CD8-positive, alpha-beta T cell (primary cell): ENCODE measurements at regions of chr19 and their contacts with region 1.

Region 1: GRCh38 chr19:9847087-9847671 is 12.1 kb downstream of the PIN1 start:
- DNase-seq: peak in 7 of 9 experiments; percentile 31 to 61 (median 51)
- ATAC-seq: peak; percentile 85
- H3K4me3 ChIP-seq: no peak overlapping the region
- H3K4me3 Mint-ChIP-seq: no peak overlapping the region
- H3K27ac ChIP-seq: no peak overlapping the region
- H3K27ac Mint-ChIP-seq: peak overlapping the region; percentile 57
- H3K4me1 ChIP-seq: peaks cover 14% of the 10 kb centered on the region
- H3K4me1 Mint-ChIP-seq: peaks cover 28% of the 10 kb centered on the region
- H3K27me3 ChIP-seq: no peaks in the 10 kb centered on the region
- H3K27me3 Mint-ChIP-seq: no peaks in the 10 kb centered on the region
- CTCF ChIP-seq: peak; percentile 34

Region 2: GRCh38 chr19:9627856-9628255 is 219.3 kb before region 1 on chr19:
- CTCF ChIA-PET with region 1: no interaction called
- POLR2A ChIA-PET with region 1: no interaction called
- intact Hi-C with region 1: loop called in 1 of 2 experiments (anchors 2 kb)
- DNase-seq: no peak
- ATAC-seq: no peak
- H3K4me3 ChIP-seq: no peak overlapping the region
- H3K4me3 Mint-ChIP-seq: no peak overlapping the region
- H3K27ac ChIP-seq: no peak overlapping the region
- H3K27ac Mint-ChIP-seq: no peak overlapping the region
- H3K4me1 ChIP-seq: no peaks in the 10 kb centered on the region
- H3K4me1 Mint-ChIP-seq: peaks cover 5% of the 10 kb centered on the region
- H3K27me3 ChIP-seq: no peaks in the 10 kb centered on the region
- H3K27me3 Mint-ChIP-seq: no peaks in the 10 kb centered on the region
- CTCF ChIP-seq: no peak

Region 3: DNA sequence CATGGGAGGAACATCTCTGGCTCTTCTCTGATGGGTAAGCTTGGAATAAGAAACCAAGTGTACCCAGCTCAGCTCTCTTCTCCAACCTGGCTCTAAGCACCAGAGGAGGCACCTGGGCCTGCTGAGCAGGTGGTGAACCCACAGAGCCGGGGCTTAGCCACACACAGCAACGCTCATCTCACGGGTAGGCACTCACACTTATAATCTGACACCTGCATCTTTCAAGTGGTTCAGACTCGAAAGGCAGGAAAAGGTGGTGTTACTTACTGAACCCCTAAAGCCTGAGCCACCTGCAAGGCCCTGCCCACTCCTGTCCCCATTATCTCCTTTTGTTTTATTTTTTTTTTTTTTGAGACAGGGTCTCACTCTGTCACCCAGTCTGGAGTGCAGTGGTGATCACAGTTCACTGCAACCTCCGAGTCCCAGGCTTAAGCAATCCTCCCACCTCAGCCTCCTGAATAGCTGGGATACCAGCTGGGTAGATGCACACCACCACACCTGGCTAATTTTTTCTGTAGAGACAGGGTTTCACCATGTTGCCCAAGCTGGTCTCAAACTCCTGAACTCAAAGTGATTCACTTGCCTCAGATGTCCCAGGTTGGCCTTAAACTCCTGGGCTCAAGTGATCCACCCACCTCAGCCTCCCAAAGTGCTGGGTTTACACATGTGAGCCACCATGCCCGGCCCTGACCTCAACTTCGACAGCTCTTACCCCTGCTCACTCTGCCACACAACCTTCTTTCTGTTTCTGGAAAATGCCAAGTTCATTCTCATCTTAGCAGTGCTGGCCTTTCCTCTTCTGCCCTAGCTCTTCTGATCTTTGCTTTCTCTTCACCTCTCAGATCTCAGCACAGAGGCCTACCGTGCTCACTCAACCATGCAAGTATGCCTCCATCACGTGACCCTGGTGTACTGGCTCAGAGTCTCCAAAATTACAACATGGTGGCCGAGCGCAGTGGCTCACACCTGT is 38.0 kb before region 1 on chr19:
- CTCF ChIA-PET with region 1: no interaction called
- POLR2A ChIA-PET with region 1: no interaction called
- intact Hi-C with region 1: no loop called
- DNase-seq: peak in 6 of 9 experiments; percentile 34 to 77 (median 66)
- ATAC-seq: peak; percentile 86
- H3K4me3 ChIP-seq: no peak overlapping the region
- H3K4me3 Mint-ChIP-seq: peak overlapping the region; percentile 23
- H3K27ac ChIP-seq: peak overlapping the region; percentile 34 to 52
- H3K27ac Mint-ChIP-seq: peak overlapping the region; percentile 70
- H3K4me1 ChIP-seq: peaks cover 54% of the 10 kb centered on the region
- H3K4me1 Mint-ChIP-seq: peaks cover 47% of the 10 kb centered on the region
- H3K27me3 ChIP-seq: no peaks in the 10 kb centered on the region
- H3K27me3 Mint-ChIP-seq: no peaks in the 10 kb centered on the region
- CTCF ChIP-seq: no peak

Region 4: DNA sequence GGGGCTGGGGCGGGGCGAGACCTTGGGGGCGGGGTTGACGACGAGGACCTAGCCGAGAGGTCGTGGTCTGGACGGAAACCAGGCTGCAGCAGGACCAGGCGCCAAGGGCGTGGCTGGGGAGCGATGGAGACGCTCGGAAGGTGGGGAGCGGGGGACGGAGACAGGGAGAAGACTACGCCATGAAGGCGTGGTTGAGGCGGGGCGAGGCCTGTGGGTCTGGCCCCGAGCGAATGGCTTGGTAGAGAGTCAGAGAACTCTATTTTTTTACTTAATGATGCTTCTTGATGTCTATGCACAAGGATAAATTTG is 27.6 kb before region 1 on chr19:
- CTCF ChIA-PET with region 1: no interaction called
- POLR2A ChIA-PET with region 1: no interaction called
- intact Hi-C with region 1: no loop called
- DNase-seq: no peak
- ATAC-seq: no peak
- H3K4me3 ChIP-seq: peak overlapping the region; percentile 53 to 65
- H3K4me3 Mint-ChIP-seq: peak overlapping the region; percentile 88
- H3K27ac ChIP-seq: peak overlapping the region; percentile 51 to 74
- H3K27ac Mint-ChIP-seq: peak overlapping the region; percentile 93
- H3K4me1 ChIP-seq: peaks cover 18% of the 10 kb centered on the region
- H3K4me1 Mint-ChIP-seq: peaks cover 37% of the 10 kb centered on the region
- H3K27me3 ChIP-seq: no peaks in the 10 kb centered on the region
- H3K27me3 Mint-ChIP-seq: no peaks in the 10 kb centered on the region
- CTCF ChIP-seq: no peak

Region 5: GRCh38 chr19:9857920-9858746 is 11.0 kb after region 1 on chr19:
- CTCF ChIA-PET with region 1: interaction called, 16 read pairs
- POLR2A ChIA-PET with region 1: interaction called, 3 read pairs
- intact Hi-C with region 1: no loop called
- DNase-seq: peak in 6 of 9 experiments; percentile 17 to 78 (median 45)
- ATAC-seq: peak; percentile 80
- H3K4me3 ChIP-seq: peak overlapping the region; percentile 50 to 63
- H3K4me3 Mint-ChIP-seq: peak overlapping the region; percentile 90
- H3K27ac ChIP-seq: peak overlapping the region; percentile 48 to 84
- H3K27ac Mint-ChIP-seq: peak overlapping the region; percentile 96
- H3K4me1 ChIP-seq: peaks cover 77% of the 10 kb centered on the region
- H3K4me1 Mint-ChIP-seq: peaks cover 86% of the 10 kb centered on the region
- H3K27me3 ChIP-seq: no peaks in the 10 kb centered on the region
- H3K27me3 Mint-ChIP-seq: no peaks in the 10 kb centered on the region
- CTCF ChIP-seq: no peak

Region 6: DNA sequence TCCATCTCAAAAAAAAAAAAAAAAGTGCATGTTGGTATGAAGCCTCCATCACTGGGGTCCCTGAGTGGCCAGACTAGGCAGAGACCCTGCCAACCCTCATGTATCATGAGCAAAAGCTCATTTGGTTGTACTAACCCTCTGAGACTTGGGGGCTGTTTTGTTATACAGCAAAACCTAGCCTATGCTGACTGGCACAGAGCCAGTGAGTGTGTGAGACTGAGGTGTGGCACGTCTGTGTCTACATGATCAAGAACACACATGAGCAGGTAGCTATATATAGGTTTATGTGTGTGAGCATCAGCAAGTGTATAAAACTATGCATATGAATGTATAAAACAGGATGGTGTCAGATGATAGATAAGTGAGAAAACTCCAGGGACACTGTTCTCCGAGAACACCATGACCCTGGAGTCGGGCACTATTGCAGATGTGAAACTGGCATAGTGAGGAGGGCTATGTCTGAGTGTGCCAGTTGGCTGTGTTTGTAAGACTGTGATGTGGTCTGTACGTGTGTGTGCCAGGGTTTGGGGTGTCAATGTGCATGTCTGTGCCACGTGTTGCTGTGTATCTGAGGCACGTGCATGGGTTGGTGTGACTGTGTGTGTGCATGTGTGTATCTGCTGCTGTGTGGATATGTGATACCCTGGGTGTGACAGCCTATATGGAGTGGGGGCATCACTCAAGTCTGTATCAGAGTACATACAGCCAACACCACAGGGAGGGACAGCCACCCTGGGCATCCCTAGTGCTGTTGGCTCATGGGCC is 44.6 kb after region 1 on chr19:
- CTCF ChIA-PET with region 1: no interaction called
- POLR2A ChIA-PET with region 1: no interaction called
- intact Hi-C with region 1: no loop called
- DNase-seq: no peak
- ATAC-seq: no peak
- H3K4me3 ChIP-seq: no peak overlapping the region
- H3K4me3 Mint-ChIP-seq: no peak overlapping the region
- H3K27ac ChIP-seq: no peak overlapping the region
- H3K27ac Mint-ChIP-seq: no peak overlapping the region
- H3K4me1 ChIP-seq: no peaks in the 10 kb centered on the region
- H3K4me1 Mint-ChIP-seq: no peaks in the 10 kb centered on the region
- H3K27me3 ChIP-seq: no peaks in the 10 kb centered on the region
- H3K27me3 Mint-ChIP-seq: peaks cover 5% of the 10 kb centered on the region
- CTCF ChIP-seq: no peak

Region 7: GRCh38 chr19:9914315-9915207 is 67.4 kb after region 1 on chr19:
- CTCF ChIA-PET with region 1: interaction called, 8 read pairs
- POLR2A ChIA-PET with region 1: no interaction called
- intact Hi-C with region 1: loop called (anchors 1 kb)
- DNase-seq: peak; percentile 69 to 89 (median 81)
- ATAC-seq: peak; percentile 92
- H3K4me3 ChIP-seq: peak overlapping the region; percentile 49 to 66
- H3K4me3 Mint-ChIP-seq: peak overlapping the region; percentile 73
- H3K27ac ChIP-seq: no peak overlapping the region
- H3K27ac Mint-ChIP-seq: no peak overlapping the region
- H3K4me1 ChIP-seq: peaks cover 15% of the 10 kb centered on the region
- H3K4me1 Mint-ChIP-seq: peaks cover 8% of the 10 kb centered on the region
- H3K27me3 ChIP-seq: peaks cover 0 to 15% of the 10 kb centered on the region in 2 experiments
- H3K27me3 Mint-ChIP-seq: peaks cover 30% of the 10 kb centered on the region
- CTCF ChIP-seq: peak; percentile 73

Region 8: DNA sequence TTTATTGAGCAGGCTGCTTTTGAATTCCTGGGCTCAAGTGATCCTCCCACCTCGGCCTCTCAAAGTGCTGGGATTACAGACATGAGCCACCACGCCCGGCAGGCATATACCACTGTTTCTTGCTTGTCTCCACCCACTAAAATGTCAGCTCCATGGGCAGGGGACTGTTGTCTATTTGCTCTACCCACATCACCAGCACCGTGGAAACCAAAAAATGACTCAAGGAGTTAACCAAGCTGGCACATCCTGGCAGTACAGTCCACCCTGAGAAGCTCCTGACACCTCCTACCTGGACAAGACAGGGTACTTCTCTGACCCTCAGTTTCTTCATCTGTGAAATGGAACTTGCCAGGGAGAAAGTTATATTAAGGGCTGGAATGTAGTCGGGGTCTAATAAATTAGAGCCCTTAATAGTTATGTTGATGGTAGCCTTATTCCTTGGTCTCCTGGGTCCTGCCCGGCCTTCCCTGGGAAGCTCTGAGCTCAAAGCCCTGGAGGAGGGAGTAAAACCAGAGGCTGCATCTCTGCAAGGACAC is 180.0 kb after region 1 on chr19:
- CTCF ChIA-PET with region 1: no interaction called
- POLR2A ChIA-PET with region 1: no interaction called
- intact Hi-C with region 1: loop called in 1 of 2 experiments (anchors 5 kb)
- DNase-seq: no peak
- ATAC-seq: no peak
- H3K4me3 ChIP-seq: no peak overlapping the region
- H3K4me3 Mint-ChIP-seq: no peak overlapping the region
- H3K27ac ChIP-seq: no peak overlapping the region
- H3K27ac Mint-ChIP-seq: no peak overlapping the region
- H3K4me1 ChIP-seq: peaks cover 8% of the 10 kb centered on the region
- H3K4me1 Mint-ChIP-seq: peaks cover 7% of the 10 kb centered on the region
- H3K27me3 ChIP-seq: peaks cover 3 to 5% of the 10 kb centered on the region in 2 experiments
- H3K27me3 Mint-ChIP-seq: peaks cover 18% of the 10 kb centered on the region
- CTCF ChIP-seq: no peak

Region 9: GRCh38 chr19:10471909-10472308 is 624.7 kb after region 1 on chr19:
- CTCF ChIA-PET with region 1: no interaction called
- POLR2A ChIA-PET with region 1: no interaction called
- intact Hi-C with region 1: no loop called
- DNase-seq: peak in 2 of 9 experiments; percentile 44 to 65
- ATAC-seq: peak; percentile 64
- H3K4me3 ChIP-seq: no peak overlapping the region
- H3K4me3 Mint-ChIP-seq: no peak overlapping the region
- H3K27ac ChIP-seq: no peak overlapping the region
- H3K27ac Mint-ChIP-seq: no peak overlapping the region
- H3K4me1 ChIP-seq: no peaks in the 10 kb centered on the region
- H3K4me1 Mint-ChIP-seq: peaks cover 2% of the 10 kb centered on the region
- H3K27me3 ChIP-seq: no peaks in the 10 kb centered on the region
- H3K27me3 Mint-ChIP-seq: peaks cover 3% of the 10 kb centered on the region
- CTCF ChIP-seq: peak; percentile 29